ENCODE measurements at regions of chr4 and their contacts with region 1.

Region 1: DNA sequence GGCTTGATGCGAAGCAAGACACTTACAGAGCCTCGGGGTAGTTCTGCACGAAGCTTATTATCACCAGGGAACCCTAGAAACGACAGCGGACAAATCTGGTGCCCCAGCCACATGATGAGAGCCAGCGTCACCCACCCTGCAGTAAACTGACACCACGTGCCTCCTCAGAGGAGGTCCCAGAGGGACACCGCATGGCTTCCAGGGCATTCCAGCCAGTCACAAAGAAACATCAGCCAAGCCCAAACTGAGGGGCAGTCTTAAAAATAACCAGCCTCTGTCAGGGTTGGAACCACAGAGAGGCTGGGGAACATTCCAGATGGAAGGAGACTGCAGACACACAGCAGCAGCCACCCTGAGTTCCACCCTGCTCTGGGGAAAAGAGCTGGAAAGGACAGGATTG is 36.6 kb upstream of the HGFAC start:
- DNase-seq: no peak
- H3K4me3 ChIP-seq: no peak overlapping the region
- H3K27ac ChIP-seq: no peak overlapping the region
- H3K4me1 ChIP-seq: peaks cover 0 to 14% (median 2%) of the 10 kb centered on the region in 4 experiments
- H3K27me3 ChIP-seq: no peaks in the 10 kb centered on the region

Region 2: DNA sequence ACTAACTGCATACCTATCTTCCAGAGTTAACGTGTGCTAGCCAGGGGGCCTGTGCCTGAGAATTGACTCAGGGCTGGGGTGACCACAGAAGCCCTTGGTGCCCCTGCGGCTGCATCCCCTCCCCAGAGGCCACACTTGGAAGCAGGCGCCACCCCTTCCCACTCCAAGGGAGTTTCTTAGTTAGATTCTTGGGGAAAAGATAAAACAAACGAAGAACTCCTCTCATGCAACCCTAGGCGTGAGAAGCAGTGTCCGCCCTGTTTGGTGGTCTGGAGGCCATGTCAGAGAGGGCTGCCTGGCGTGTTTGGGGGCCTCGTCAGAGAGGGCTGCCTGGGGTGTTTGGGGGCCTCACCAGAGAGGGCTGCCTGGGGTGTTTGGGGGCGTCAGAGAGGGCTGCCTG is 13.8 kb before region 1 on chr4:
- CTCF ChIA-PET with region 1: interaction called, 13 read pairs
- POLR2A ChIA-PET with region 1: interaction called, 3 read pairs
- DNase-seq: no peak
- H3K4me3 ChIP-seq: no peak overlapping the region
- H3K27ac ChIP-seq: no peak overlapping the region
- H3K4me1 ChIP-seq: peaks cover 2 to 42% (median 33%) of the 10 kb centered on the region in 4 experiments
- H3K27me3 ChIP-seq: no peaks in the 10 kb centered on the region